Naive thymus-derived CD4-positive, alpha-beta T cell (primary cell): ENCODE measurements at regions of chr17 and their contacts with region 1.

Region 1: GRCh38 chr17:68184816-68185436 is 62.9 kb upstream of the AMZ2 start:
- DNase-seq: peak in 7 of 9 donors; percentile 57 to 75 (median 64)
- ATAC-seq: peak; percentile 87
- H3K4me3 ChIP-seq: peak overlapping the region; percentile 29
- H3K4me3 Mint-ChIP-seq: peak overlapping the region; percentile 69 to 89 (median 76)
- H3K27ac ChIP-seq: peak overlapping the region; percentile 39
- H3K27ac Mint-ChIP-seq: peak overlapping the region; percentile 60 to 93 (median 89)
- H3K4me1 ChIP-seq: peaks cover 39 to 48% of the 10 kb centered on the region in 2 donors
- H3K4me1 Mint-ChIP-seq: peaks cover 22 to 62% (median 55%) of the 10 kb centered on the region in 7 donors
- H3K27me3 ChIP-seq: no peaks in the 10 kb centered on the region
- H3K27me3 Mint-ChIP-seq: peaks cover 0 to 4% (median 0%) of the 10 kb centered on the region in 5 donors

Region 2: GRCh38 chr17:68172461-68172954 is 12.4 kb before region 1 on chr17:
- CTCF ChIA-PET with region 1: interaction called, 27 read pairs
- POLR2A ChIA-PET with region 1: interaction called, 14 read pairs
- intact Hi-C with region 1: loop called (anchors 1 kb)
- DNase-seq: peak; percentile 45 to 74 (median 67)
- ATAC-seq: peak; percentile 92
- H3K4me3 ChIP-seq: no peak overlapping the region
- H3K4me3 Mint-ChIP-seq: no peak overlapping the region
- H3K27ac ChIP-seq: no peak overlapping the region
- H3K27ac Mint-ChIP-seq: no peak overlapping the region
- H3K4me1 ChIP-seq: peaks cover 0 to 7% of the 10 kb centered on the region in 2 donors
- H3K4me1 Mint-ChIP-seq: peaks cover 14 to 38% (median 20%) of the 10 kb centered on the region in 7 donors
- H3K27me3 ChIP-seq: no peaks in the 10 kb centered on the region
- H3K27me3 Mint-ChIP-seq: peaks cover 0 to 1% (median 0%) of the 10 kb centered on the region in 5 donors

Region 3: GRCh38 chr17:68196944-68197595 is 12.1 kb after region 1 on chr17:
- CTCF ChIA-PET with region 1: interaction called, 39 read pairs
- POLR2A ChIA-PET with region 1: interaction called, 113 read pairs
- intact Hi-C with region 1: loop called (anchors 1 kb)
- DNase-seq: peak in 2 of 9 donors; percentile 22 to 41
- ATAC-seq: peak; percentile 14
- H3K4me3 ChIP-seq: peak overlapping the region; percentile 61
- H3K4me3 Mint-ChIP-seq: peak overlapping the region; percentile 25 to 91 (median 68)
- H3K27ac ChIP-seq: no peak overlapping the region
- H3K27ac Mint-ChIP-seq: no peak overlapping the region
- H3K4me1 ChIP-seq: peaks cover 21 to 39% of the 10 kb centered on the region in 2 donors
- H3K4me1 Mint-ChIP-seq: peaks cover 11 to 40% (median 17%) of the 10 kb centered on the region in 7 donors
- H3K27me3 ChIP-seq: peaks cover 0 to 4% of the 10 kb centered on the region in 2 donors
- H3K27me3 Mint-ChIP-seq: peaks cover 4 to 69% (median 9%) of the 10 kb centered on the region in 5 donors

Region 4: GRCh38 chr17:68247445-68248198 is 62.7 kb after region 1 on chr17 and contains the start of gene AMZ2:
- CTCF ChIA-PET with region 1: interaction called, 3 read pairs
- POLR2A ChIA-PET with region 1: interaction called, 23 read pairs
- intact Hi-C with region 1: loop called (anchors 2 kb)
- DNase-seq: peak; percentile 92 to 100 (median 97)
- ATAC-seq: peak; percentile 96
- H3K4me3 ChIP-seq: peak within 1 kb of the TSS; percentile 89
- H3K4me3 Mint-ChIP-seq: peak within 1 kb of the TSS; percentile 80 to 96 (median 92)
- H3K27ac ChIP-seq: peak within 1 kb of the TSS; percentile 99
- H3K27ac Mint-ChIP-seq: peak within 1 kb of the TSS; percentile 78 to 99 (median 97)
- H3K4me1 ChIP-seq: peaks cover 18 to 36% of the 10 kb centered on the region in 2 donors
- H3K4me1 Mint-ChIP-seq: peaks cover 11 to 52% (median 31%) of the 10 kb centered on the region in 7 donors
- H3K27me3 ChIP-seq: no peaks in the 10 kb centered on the region
- H3K27me3 Mint-ChIP-seq: no peaks in the 10 kb centered on the region
- total RNA-seq, gene AMZ2: 47.6 to 85.5 (median 73.8) TPM